ENCODE measurements at regions of chr15 and their contacts with region 1.

Region 1: DNA sequence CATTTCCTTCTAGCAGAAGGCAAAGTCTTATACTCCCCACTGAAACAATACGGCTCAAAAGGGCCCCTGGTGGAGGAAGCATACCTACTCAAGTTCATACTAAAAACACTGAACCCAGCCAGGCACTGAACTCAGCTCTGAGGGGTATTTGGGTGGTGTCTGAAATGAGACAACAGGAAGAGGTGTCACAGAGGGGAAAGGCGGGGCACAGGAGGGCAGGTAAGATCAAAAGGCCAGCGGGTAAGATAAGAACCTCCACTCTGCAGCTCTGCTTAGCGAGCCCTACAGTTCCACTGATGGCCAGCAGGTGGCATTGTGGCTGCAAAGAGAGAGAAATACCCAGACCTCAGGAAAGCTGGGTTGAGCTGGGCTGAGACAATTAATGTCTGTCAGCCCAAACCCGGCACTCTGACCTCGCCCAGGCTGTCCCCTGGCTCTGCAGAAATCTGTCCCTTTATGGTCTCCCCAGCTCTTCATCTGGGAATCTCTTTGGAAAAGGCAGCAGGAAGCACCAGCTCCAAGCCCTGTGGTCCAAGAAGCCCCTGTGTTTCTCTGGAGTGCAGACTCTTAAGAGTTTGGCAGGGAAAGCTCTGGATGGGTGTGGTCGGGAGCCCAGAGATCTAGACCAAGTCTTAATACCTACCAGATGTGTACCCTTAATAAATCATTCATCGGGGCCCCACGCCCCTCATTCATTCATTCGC is 8.4 kb downstream of the MFGE8 start:
- DNase-seq: peak; percentile 85 to 94
- H3K4me3 ChIP-seq: no peak overlapping the region
- H3K27ac ChIP-seq: peak overlapping the region in 1 of 5 donors; percentile 21
- H3K4me1 ChIP-seq: peaks cover 4 to 30% (median 14%) of the 10 kb centered on the region in 4 donors
- H3K27me3 ChIP-seq: no peaks in the 10 kb centered on the region
- CTCF ChIP-seq: peak in 6 of 7 experiments; percentile 81 to 100 (median 96)
- EP300 ChIP-seq: no peak
- POLR2A ChIP-seq: no peak

Region 2: DNA sequence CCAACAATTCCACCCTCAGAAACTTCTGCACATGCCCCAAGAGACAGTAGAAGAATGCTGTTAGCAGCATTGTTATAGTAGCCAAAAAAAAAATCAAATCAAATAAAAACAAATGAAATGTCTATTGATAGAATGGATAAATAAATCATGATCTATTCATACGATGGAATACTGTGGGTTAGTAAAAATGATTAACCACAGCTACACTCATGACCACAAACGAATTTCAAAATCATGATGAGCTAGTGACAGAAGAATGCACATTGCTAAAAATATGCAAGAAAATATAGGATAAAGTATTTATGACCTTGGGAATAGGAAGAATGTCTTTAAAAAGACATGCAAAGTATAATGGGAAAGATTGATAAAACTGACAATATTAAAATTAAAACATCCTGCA is 159.1 kb before region 1 on chr15:
- intact Hi-C with region 1: no loop called
- DNase-seq: no peak
- H3K4me3 ChIP-seq: no peak overlapping the region
- H3K27ac ChIP-seq: no peak overlapping the region
- H3K4me1 ChIP-seq: no peaks in the 10 kb centered on the region
- H3K27me3 ChIP-seq: peaks cover 0 to 35% (median 10%) of the 10 kb centered on the region in 3 donors
- CTCF ChIP-seq: no peak
- EP300 ChIP-seq: no peak
- POLR2A ChIP-seq: no peak

Region 3: DNA sequence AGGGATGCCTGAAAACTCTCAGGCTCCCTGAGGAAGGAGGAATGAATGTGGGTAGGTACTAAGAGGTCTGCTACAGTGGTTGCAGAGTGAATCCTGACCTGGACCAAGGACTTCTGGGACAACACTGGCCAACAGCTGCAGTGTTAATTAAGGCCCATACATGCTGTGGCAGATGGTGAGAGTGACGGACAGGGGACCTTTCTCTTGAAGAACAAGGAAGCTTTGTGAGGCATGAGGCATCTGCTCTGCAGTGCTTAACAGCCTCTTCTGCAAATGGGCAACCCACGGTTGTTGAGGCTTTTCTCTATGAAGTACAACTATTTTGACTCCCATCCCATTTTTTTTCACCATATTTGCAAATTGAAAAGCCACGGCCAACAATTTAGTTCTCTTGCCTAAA is 128.1 kb before region 1 on chr15:
- intact Hi-C with region 1: no loop called
- DNase-seq: peak in 1 of 2 donors; percentile 11
- H3K4me3 ChIP-seq: no peak overlapping the region
- H3K27ac ChIP-seq: no peak overlapping the region
- H3K4me1 ChIP-seq: no peaks in the 10 kb centered on the region
- H3K27me3 ChIP-seq: peaks cover 0 to 16% (median 0%) of the 10 kb centered on the region in 3 donors
- CTCF ChIP-seq: no peak
- EP300 ChIP-seq: no peak
- POLR2A ChIP-seq: no peak

Region 4: DNA sequence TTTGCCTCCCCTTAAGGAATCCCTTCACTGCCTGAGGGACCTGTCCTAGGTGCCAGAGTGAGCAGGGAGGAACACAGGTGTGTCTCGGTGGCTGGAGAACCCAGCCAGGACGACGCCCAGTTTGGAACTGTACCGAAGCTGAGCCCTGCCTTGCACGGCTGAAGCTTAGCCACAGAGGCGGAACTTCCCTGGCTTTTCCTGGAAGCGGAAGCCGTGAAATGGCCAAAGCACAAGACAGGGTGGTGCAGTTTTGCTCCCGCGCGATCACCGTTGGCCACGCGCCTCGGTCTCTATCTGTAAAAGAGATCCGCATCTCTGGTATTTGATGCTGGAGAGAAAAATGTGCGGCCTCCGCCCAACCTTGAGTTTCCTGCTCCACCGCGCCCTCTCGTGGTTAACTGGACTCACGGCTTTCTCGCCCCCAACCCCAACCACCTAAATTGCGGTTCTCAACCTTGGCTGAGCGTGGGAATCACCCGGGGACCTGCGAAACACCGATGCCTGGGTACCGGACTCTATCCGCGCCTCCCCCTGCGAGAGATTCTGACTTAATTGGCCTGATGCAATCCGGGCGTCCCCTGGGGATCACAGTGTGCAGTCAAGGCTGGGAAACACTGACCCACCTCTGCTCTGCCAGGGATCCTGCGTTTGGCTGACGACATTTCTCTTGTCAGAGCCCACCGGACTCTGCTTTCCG is 112.7 kb after region 1 on chr15:
- intact Hi-C with region 1: loop called (anchors 5 kb)
- DNase-seq: peak; percentile 77 to 92
- H3K4me3 ChIP-seq: peak overlapping the region; percentile 16 to 28 (median 20)
- H3K27ac ChIP-seq: peak overlapping the region in 4 of 5 donors; percentile 31 to 82 (median 62)
- H3K4me1 ChIP-seq: peaks cover 6 to 40% (median 18%) of the 10 kb centered on the region in 4 donors
- H3K27me3 ChIP-seq: peaks cover 0 to 11% (median 4%) of the 10 kb centered on the region in 3 donors
- CTCF ChIP-seq: peak in 5 of 7 experiments; percentile 60 to 83 (median 67)
- EP300 ChIP-seq: peak; percentile 54
- POLR2A ChIP-seq: no peak

Region 5: GRCh38 chr15:89177633-89178306 is 273.0 kb after region 1 on chr15:
- intact Hi-C with region 1: loop called (anchors 10 kb)
- DNase-seq: peak; percentile 59 to 93
- H3K4me3 ChIP-seq: no peak overlapping the region
- H3K27ac ChIP-seq: peak overlapping the region in 1 of 5 donors; percentile 48
- H3K4me1 ChIP-seq: peaks cover 4 to 25% (median 14%) of the 10 kb centered on the region in 4 donors
- H3K27me3 ChIP-seq: no peaks in the 10 kb centered on the region
- CTCF ChIP-seq: peak in 5 of 7 experiments; percentile 59 to 85 (median 73)
- EP300 ChIP-seq: no peak
- POLR2A ChIP-seq: no peak

Measured in stomach (tissue), 19 donors.